ENCODE measurements at regions of chr20 and their contacts with region 1.

Region 1: GRCh38 chr20:17682103-17682888 is at the start of gene RRBP1:
- DNase-seq: peak; percentile 98 to 99
- ATAC-seq: peak; percentile 95 to 99 (median 98)
- H3K4me3 ChIP-seq: peak within 1 kb of the TSS; percentile 65 to 87 (median 82)
- H3K27ac ChIP-seq: peak within 1 kb of the TSS; percentile 73 to 100 (median 94)
- H3K4me1 ChIP-seq: peaks cover 6 to 38% (median 17%) of the 10 kb centered on the region in 9 donors
- H3K27me3 ChIP-seq: peaks cover 0 to 5% (median 0%) of the 10 kb centered on the region in 7 donors
- CTCF ChIP-seq: peak; percentile 38 to 82 (median 65)
- total RNA-seq, gene RRBP1: 23.5 to 71.3 (median 29.0) TPM

Region 2: GRCh38 chr20:17749975-17750721 is 67.9 kb after region 1 on chr20:
- intact Hi-C with region 1: loop called in 2 of 10 experiments (anchors 5 to 10 kb)
- DNase-seq: peak; percentile 74 to 83
- ATAC-seq: peak; percentile 91 to 97 (median 96)
- H3K4me3 ChIP-seq: no peak overlapping the region
- H3K27ac ChIP-seq: peak overlapping the region in 6 of 10 donors; percentile 45 to 70 (median 59)
- H3K4me1 ChIP-seq: peaks cover 0 to 24% (median 16%) of the 10 kb centered on the region in 9 donors
- H3K27me3 ChIP-seq: peaks cover 0 to 4% (median 0%) of the 10 kb centered on the region in 7 donors
- CTCF ChIP-seq: no peak

Region 3: GRCh38 chr20:17806739-17807441 is 124.6 kb after region 1 on chr20:
- intact Hi-C with region 1: loop called in 2 of 10 experiments (anchors 2 to 5 kb)
- DNase-seq: peak; percentile 83 to 88
- ATAC-seq: peak; percentile 92 to 96 (median 92)
- H3K4me3 ChIP-seq: peak overlapping the region in 4 of 10 donors; percentile 12 to 31 (median 14)
- H3K27ac ChIP-seq: peak overlapping the region; percentile 3 to 90 (median 76)
- H3K4me1 ChIP-seq: peaks cover 8 to 58% (median 43%) of the 10 kb centered on the region in 9 donors
- H3K27me3 ChIP-seq: no peaks in the 10 kb centered on the region
- CTCF ChIP-seq: peak in 3 of 9 donors; percentile 8 to 22 (median 17)

Region 4: DNA sequence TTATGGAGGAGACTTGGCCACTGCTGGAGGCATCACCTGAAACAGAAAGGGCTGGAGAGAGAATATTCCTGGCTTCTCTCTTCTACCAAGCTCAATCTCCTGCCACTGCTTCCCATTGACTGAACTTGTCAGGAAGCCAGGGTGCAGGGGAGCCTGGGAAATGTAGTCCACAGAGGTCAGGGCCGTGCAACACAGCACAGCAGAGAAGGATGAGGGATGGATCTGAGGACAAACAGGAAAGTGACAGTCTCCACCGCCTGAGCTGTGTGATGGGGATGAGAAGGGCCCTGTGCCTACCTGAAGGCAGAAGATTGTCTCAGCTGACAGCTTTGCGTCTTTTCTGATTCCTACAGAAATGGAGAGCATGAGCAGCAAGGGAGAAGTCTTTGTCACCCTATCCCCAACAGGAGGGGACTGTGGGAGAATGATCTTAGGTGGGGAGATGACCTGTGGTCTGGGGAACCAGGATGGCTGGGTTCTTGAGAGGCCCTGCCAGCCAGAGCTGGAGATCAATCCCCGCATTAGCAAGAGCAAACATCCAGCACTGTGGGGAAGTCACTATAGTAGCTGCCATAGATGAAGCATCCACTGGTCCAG is 172.1 kb after region 1 on chr20:
- intact Hi-C with region 1: loop called in 2 of 10 experiments (anchors 5 to 10 kb)
- DNase-seq: peak; percentile 56 to 77
- ATAC-seq: peak in 7 of 8 donors; percentile 32 to 66 (median 57)
- H3K4me3 ChIP-seq: no peak overlapping the region
- H3K27ac ChIP-seq: no peak overlapping the region
- H3K4me1 ChIP-seq: peaks cover 0 to 28% (median 17%) of the 10 kb centered on the region in 9 donors
- H3K27me3 ChIP-seq: no peaks in the 10 kb centered on the region
- CTCF ChIP-seq: no peak

Region 5: GRCh38 chr20:17904027-17904426 is 221.7 kb after region 1 on chr20:
- intact Hi-C with region 1: loop called in 7 of 10 experiments (anchors 2 to 10 kb)
- DNase-seq: no peak
- ATAC-seq: no peak
- H3K4me3 ChIP-seq: no peak overlapping the region
- H3K27ac ChIP-seq: no peak overlapping the region
- H3K4me1 ChIP-seq: no peaks in the 10 kb centered on the region
- H3K27me3 ChIP-seq: no peaks in the 10 kb centered on the region
- CTCF ChIP-seq: no peak

Region 6: DNA sequence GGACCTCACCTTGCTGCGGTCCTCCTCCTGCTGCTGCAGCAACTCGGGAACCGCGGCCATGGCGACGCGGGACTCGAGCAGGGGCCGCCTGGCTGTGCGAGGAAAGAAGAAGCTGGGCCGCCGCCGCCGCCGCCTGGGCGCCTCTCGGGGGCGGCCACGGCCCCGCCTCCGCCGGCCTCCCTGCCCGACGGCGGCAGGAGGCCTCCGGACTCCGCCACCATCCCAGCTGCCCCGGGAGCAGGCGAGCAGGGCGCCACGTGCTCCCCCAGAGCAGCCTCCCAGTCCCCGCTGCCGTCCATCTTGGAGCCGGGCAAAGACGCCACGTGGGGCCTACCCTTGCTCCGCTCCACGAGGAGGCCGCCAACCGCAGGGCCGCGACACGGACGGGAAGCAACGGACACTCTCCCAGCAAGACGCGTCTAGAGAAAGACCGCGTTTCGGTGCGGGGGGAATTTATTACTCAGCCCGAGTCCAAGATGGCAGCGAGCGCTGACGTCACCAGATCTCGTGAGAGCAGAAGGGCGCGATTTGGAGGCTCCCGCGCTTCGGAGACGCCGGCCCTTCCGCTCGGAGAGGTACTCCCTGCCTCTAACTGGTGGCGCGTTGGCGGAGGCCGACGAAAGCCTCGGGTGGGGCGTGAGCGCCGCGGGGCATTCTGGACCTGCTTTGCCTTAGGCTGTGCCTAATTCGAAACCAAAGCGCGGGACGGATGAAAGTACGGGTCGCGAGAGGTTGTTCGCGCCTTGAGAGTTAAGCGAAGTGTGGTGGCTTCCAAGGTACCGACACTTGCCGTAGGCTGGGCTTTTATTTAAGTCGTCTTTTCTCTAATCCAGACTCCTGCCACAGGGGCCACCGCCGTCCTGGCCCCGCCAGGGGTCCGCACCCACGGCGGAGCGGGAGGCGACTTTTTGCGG is 286.3 kb after region 1 on chr20 and contains the starts of genes MGME1 and SNX5:
- intact Hi-C with region 1: loop called in 1 of 10 experiments (anchors 10 kb)
- DNase-seq: peak; percentile 100
- ATAC-seq: peak; percentile 95 to 99 (median 98)
- H3K4me3 ChIP-seq: peak within 1 kb of the TSS; percentile 75 to 97 (median 92)
- H3K27ac ChIP-seq: peak within 1 kb of the TSS; percentile 89 to 99 (median 96)
- H3K4me1 ChIP-seq: peaks cover 0 to 80% (median 77%) of the 10 kb centered on the region in 9 donors
- H3K27me3 ChIP-seq: no peaks in the 10 kb centered on the region
- CTCF ChIP-seq: peak in 2 of 9 donors; percentile 10 to 20
- total RNA-seq, gene MGME1: 9.7 to 16.0 (median 12.9) TPM
- total RNA-seq, gene SNX5: 41.6 to 59.1 (median 47.3) TPM